Sciatic nerve (tissue), 2 donors: ENCODE measurements at regions of chr9 and their contacts with region 1.

Region 1: DNA sequence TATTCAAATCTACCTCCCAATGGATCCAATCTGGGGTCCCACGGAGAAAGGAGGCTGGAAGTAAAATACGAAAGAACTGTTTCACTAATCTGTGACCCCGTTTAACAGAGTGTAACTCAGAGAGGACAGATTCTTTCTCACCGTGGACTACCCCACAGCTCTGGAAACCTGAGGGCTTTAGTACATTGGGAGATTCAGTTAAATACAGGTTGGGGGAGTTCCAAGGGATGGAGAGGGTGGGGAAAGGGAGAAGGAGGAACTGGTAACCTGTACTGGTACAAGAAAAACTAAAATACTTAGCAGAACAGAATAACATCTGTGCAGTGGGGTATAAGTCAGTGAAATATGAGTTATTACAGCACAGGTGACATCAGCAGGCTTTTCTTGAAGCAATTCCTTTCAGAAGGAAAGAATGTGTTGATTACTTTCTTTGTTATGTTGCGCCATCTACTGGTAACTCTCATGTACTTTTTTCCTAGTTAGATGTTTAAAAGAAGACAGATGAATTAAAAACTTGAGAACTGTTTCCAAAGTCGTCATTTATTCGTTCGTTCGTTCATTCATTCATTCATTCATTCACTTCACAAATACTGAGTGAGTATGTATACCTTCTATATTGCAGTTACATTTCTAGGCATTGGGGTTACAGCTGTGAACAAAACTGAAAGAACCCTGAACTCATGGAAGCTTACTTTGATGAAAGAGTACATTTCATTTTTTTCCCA is 30.0 kb upstream of the STOM start:
- DNase-seq: no peak
- ATAC-seq: peak; percentile 67

Region 2: DNA sequence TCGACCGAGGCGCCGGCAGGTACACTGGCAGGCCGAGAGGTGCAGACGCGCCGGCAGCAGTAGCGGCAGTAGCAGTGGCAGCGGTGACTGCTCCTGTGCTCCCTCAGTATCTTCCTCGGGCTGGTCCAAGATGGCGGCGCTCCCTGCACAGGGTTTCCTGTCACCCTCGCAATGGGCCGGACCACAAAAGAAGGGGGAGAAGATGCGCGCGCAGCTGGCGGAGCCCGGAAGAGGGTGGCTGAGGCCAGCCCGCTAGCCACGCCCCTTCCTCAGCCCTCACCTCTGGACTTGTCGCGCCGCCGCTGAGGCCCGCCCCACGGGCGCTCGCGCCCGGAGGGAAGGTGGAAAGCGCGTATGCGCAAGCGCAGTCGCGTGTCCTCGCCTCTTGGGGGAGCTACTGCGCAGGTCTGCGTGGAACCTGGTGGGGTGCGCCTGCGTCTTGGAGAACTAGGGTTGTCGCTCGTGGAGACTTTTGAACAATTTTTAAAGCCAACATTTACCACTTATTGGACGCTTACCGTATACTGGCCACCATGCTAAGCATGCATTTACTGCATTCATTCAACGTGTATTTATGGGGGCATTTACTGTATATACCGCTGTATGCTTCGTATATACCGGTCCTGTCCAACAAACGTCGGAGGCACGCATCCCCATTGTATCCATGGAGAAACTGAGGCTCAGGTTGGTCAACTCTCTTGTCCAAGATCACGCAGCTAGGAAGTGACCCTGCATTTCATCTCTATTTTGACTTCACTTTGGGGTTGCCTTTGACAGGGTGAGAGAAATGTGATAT is 198.1 kb before region 1 on chr9 and contains the start of gene RAB14:
- intact Hi-C with region 1: loop called (anchors 10 kb)
- DNase-seq: peak; percentile 100
- ATAC-seq: peak; percentile 99
- total RNA-seq, gene RAB14: 67.7 TPM

Region 3: DNA sequence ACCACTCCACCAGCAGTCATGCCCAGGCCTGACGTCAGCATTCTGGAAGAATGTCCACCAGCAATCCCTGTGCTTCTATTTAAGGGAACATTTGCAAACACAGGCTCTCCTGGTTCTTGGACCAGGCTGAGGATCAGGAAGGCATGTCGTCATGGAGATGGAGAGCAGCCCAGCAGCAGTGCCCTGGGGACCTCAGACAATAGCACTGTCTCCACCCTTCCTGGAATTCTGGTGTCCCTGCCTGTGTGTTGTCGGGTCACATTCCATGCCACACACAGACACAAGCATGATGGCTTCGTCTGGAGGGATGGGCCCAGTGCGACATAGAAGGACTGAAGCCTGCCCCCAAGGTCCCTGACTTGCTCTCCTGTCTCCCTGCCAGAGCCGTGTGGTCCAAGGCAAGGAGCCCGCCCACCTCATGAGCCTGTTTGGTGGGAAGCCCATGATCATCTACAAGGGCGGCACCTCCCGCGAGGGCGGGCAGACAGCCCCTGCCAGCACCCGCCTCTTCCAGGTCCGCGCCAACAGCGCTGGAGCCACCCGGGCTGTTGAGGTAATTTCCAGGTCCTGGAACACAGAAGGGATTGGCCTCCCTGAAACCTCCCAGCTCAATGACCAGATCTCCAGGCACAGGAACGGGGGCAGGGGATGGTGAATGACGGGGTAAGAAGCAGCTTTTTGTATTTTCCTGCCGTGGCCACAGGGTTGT is 73.8 kb before region 1 on chr9:
- intact Hi-C with region 1: loop called (anchors 10 kb)
- DNase-seq: peak; percentile 87
- ATAC-seq: peak; percentile 93